ENCODE measurements at regions of chr16 and their contacts with region 1.

Region 1: DNA sequence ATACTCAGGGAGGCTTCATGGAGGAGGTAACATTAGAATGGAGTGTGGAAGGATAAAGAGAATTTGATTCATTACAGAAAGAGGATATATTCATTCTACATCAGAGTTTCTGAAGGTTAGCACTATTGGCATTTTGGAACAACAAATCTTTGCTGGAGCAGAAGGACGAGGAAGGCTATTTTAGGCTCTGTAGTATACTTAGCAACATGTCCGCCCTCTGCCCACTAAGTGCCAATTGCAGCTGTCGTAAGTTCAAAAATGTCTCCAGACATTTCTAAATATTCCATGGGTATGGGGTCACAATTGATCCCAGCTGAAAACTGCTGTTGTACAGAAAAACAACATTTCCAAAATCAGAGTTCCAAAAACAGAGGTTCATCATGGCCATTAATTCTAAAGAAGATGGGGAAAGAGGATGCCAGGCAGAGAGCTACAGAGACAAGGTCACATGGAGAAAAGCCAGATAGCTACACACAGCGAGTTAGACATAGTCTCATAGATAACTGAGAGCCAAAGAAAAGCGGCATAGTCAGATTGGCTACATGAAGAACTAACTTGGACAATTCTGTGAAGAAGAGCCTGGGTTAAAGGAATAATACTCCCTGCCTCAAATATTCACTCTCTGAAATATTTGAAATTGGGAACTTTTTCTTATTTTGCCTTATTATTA is 846.4 kb upstream of the CDH8 start:
- DNase-seq: no peak
- H3K4me3 ChIP-seq: no peak overlapping the region
- H3K27ac ChIP-seq: no peak overlapping the region
- H3K4me1 ChIP-seq: no peaks in the 10 kb centered on the region
- H3K27me3 ChIP-seq: no peaks in the 10 kb centered on the region
- CTCF ChIP-seq: no peak
- POLR2A ChIP-seq: no peak

Region 2: GRCh38 chr16:61471737-61472136 is 1411.0 kb before region 1 on chr16:
- intact Hi-C with region 1: loop called (anchors 5 kb)
- DNase-seq: no peak
- H3K4me3 ChIP-seq: no peak overlapping the region
- H3K27ac ChIP-seq: no peak overlapping the region
- H3K4me1 ChIP-seq: no peaks in the 10 kb centered on the region
- H3K27me3 ChIP-seq: no peaks in the 10 kb centered on the region
- CTCF ChIP-seq: no peak
- POLR2A ChIP-seq: no peak

Region 3: GRCh38 chr16:62950351-62950750 is 67.7 kb after region 1 on chr16:
- intact Hi-C with region 1: no loop called
- DNase-seq: no peak
- H3K4me3 ChIP-seq: no peak overlapping the region
- H3K27ac ChIP-seq: no peak overlapping the region
- H3K4me1 ChIP-seq: no peaks in the 10 kb centered on the region
- H3K27me3 ChIP-seq: no peaks in the 10 kb centered on the region
- CTCF ChIP-seq: no peak
- POLR2A ChIP-seq: no peak